IMR-90 (cell line): ENCODE measurements at regions of chr6 and their contacts with region 1.

Region 1: DNA sequence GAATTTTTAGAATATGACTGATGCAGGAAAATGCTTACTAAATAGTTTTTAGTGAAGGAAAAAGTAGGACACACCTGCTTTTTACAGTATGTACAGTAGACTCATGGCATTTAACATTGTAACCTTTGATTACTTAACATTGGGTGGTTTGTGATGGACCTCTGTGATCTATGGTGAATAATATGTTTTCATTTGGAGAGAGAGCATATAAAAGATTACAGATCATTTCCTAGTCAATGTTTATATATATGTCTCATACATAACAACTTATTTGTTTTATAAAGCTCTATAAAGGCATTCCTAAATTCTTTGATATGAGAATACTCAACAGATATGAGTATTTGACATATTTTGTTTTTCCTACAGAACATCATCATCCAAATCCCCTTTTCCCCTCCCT is 129.3 kb upstream of the PDE7B start:
- DNase-seq: peak; percentile 45
- ATAC-seq: peak; percentile 61
- H3K4me3 ChIP-seq: no peak overlapping the region; the same call in 1 of the 2 replicates
- H3K27ac ChIP-seq: peak overlapping the region; percentile 33; the same call in 1 of the 2 replicates
- H3K4me1 ChIP-seq: peaks cover 4% of the 10 kb centered on the region
- H3K27me3 ChIP-seq: no peaks in the 10 kb centered on the region
- CTCF ChIP-seq: no peak
- POLR2A ChIP-seq: no peak
- RAD21 ChIP-seq: no peak

Region 2: GRCh38 chr6:135506270-135506997 is 215.8 kb before region 1 on chr6:
- CTCF ChIA-PET with region 1: no interaction called
- POLR2A ChIA-PET with region 1: no interaction called
- dilution Hi-C with region 1: no loop called
- in situ Hi-C with region 1: no loop called
- intact Hi-C with region 1: no loop called
- DNase-seq: peak; percentile 74
- ATAC-seq: peak; percentile 86
- H3K4me3 ChIP-seq: no peak overlapping the region
- H3K27ac ChIP-seq: no peak overlapping the region
- H3K4me1 ChIP-seq: peaks cover 2% of the 10 kb centered on the region; the same call in 1 of the 2 replicates
- H3K27me3 ChIP-seq: no peaks in the 10 kb centered on the region
- CTCF ChIP-seq: peak; percentile 68
- POLR2A ChIP-seq: no peak
- RAD21 ChIP-seq: peak; percentile 85

Region 3: DNA sequence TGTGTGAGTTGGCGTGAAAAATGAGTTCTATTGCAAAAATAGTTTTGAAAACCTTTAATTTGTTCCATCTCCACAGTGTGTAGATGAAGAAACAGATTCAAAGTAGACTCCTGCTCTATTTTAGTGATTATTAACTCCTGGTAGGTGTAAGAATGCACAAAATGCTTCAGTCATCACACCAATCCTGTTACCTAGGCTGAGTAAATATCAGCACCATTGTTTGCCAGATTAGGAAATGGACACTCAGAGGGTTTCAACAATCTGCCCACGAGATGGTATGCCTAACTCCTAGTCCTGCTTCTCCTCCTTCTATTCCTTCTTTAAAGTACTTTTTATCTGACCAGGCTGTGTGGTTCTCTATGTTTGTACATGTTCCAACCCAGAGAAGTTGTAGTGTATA is 115.8 kb before region 1 on chr6:
- CTCF ChIA-PET with region 1: no interaction called
- POLR2A ChIA-PET with region 1: no interaction called
- dilution Hi-C with region 1: no loop called
- in situ Hi-C with region 1: no loop called
- intact Hi-C with region 1: no loop called
- DNase-seq: no peak
- ATAC-seq: no peak
- H3K4me3 ChIP-seq: no peak overlapping the region
- H3K27ac ChIP-seq: no peak overlapping the region
- H3K4me1 ChIP-seq: no peaks in the 10 kb centered on the region
- H3K27me3 ChIP-seq: no peaks in the 10 kb centered on the region
- CTCF ChIP-seq: no peak
- POLR2A ChIP-seq: no peak
- RAD21 ChIP-seq: no peak

Region 4: GRCh38 chr6:135686784-135687301 is 35.3 kb before region 1 on chr6:
- CTCF ChIA-PET with region 1: no interaction called
- POLR2A ChIA-PET with region 1: interaction called, 11 read pairs
- dilution Hi-C with region 1: no loop called
- in situ Hi-C with region 1: no loop called
- intact Hi-C with region 1: no loop called
- DNase-seq: peak; percentile 60
- ATAC-seq: no peak; the same call in 1 of the 2 replicates
- H3K4me3 ChIP-seq: no peak overlapping the region
- H3K27ac ChIP-seq: no peak overlapping the region
- H3K4me1 ChIP-seq: peaks cover 5% of the 10 kb centered on the region; the same call in 1 of the 2 replicates
- H3K27me3 ChIP-seq: no peaks in the 10 kb centered on the region
- CTCF ChIP-seq: no peak
- POLR2A ChIP-seq: no peak
- RAD21 ChIP-seq: no peak

Region 5: GRCh38 chr6:135867332-135867731 is 145.1 kb after region 1 on chr6:
- CTCF ChIA-PET with region 1: interaction called, 12 read pairs
- POLR2A ChIA-PET with region 1: no interaction called
- dilution Hi-C with region 1: no loop called
- in situ Hi-C with region 1: no loop called
- intact Hi-C with region 1: no loop called
- DNase-seq: no peak
- ATAC-seq: no peak
- H3K4me3 ChIP-seq: no peak overlapping the region
- H3K27ac ChIP-seq: no peak overlapping the region
- H3K4me1 ChIP-seq: peaks cover 6% of the 10 kb centered on the region
- H3K27me3 ChIP-seq: no peaks in the 10 kb centered on the region
- CTCF ChIP-seq: no peak
- POLR2A ChIP-seq: no peak
- RAD21 ChIP-seq: no peak